CD14-positive monocyte (primary cell): ENCODE measurements at regions of chr19 and their contacts with region 1.

Region 1: DNA sequence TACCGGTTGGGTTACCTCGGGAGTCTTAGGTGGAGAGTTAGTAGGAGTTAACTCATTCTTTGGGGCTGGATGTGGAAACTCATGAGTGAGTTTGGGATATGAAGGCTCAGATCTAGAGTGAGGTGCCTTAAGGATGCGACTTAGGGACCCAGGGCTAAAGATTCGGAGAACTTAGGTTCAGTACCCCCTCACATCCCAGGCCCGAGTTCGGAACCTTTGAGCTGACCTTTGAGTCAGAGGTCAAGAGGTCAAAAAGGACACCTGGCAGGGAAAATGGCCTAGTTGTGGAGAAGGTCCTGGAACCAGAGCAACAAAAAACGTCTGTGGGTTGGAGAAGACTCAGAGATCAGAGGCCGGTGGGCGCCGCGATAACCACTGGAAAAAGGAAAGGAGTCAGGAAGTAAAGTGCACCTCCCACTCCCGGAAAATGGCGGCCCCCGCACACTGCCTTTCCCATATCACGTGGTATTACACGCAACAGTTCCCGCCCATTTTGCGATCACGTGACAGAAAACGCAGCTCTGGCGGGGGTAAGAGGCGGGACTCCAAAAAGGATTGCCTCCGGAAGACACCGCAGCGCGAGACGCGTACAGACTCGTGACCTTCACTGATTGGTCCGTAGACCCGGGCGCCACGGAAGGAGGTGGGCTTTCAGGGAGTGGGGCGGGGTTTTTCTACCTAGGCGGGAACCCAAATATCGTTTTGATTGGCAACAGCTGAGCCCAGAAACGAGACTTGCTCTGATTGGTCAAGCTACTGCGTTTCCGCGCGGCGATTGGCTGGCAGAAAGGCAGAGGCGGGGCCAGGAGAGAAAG is at the start of gene ACTMAP:
- DNase-seq: peak; percentile 100
- H3K4me3 ChIP-seq: peak within 1 kb of the TSS; percentile 47 to 76 (median 65)
- H3K4me3 Mint-ChIP-seq: peak within 1 kb of the TSS; percentile 92 to 100
- H3K27ac ChIP-seq: peak within 1 kb of the TSS; percentile 92 to 98
- H3K27ac Mint-ChIP-seq: peak within 1 kb of the TSS; percentile 99 to 100 (median 99)
- H3K4me1 ChIP-seq: peaks cover 67 to 70% of the 10 kb centered on the region in 2 donors
- H3K4me1 Mint-ChIP-seq: peaks cover 59% of the 10 kb centered on the region
- H3K27me3 ChIP-seq: no peaks in the 10 kb centered on the region
- H3K27me3 Mint-ChIP-seq: peaks cover 0 to 5% (median 0%) of the 10 kb centered on the region in 3 donors
- CTCF ChIP-seq: no peak
- polyA plus RNA-seq, gene ACTMAP: 4.3 to 13.0 (median 8.5) TPM

Region 2: DNA sequence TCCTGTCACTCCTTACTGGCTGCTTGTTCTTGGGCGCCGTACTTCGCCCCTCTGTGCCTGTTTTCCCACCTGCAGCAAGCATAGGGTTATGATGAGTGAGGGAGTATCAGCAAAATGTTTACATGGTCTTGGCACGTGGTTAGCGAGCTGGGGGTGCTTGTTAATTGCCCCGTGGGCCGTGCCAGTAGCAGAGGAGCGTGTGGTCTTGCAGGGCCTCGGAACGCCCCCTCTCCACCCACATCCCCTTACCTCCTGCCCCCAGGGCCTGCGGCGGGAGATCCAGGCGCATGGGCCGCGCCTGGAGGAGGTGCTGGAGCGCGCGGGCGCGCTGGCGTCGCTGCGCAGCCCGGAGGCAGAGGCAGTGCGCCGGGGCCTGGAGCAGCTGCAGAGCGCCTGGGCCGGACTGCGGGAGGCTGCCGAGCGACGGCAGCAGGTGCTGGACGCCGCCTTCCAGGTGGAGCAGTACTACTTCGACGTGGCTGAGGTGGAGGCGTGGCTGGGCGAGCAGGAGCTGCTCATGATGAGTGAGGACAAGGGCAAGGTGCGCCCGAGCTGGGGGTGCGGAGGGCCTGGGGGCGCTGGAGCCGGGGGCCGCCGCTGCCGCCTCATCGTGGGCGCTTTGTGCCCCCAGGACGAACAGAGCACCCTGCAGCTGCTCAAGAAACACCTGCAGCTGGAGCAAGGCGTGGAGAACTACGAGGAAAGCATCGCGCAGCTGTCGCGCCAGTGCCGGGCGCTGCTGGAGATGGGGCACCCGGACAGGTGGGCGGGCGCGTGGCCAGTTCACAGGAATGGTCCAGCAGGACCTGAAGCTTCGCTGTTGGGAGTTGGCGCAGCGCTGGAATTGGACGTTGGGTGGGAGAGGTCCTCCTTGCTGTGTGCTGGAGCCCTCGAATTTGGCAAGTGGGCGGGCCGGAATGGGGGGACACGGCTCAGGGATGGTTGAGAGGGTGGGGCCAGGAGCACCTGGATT is 196.1 kb before region 1 on chr19:
- intact Hi-C with region 1: no loop called
- DNase-seq: no peak
- H3K4me3 ChIP-seq: no peak overlapping the region
- H3K4me3 Mint-ChIP-seq: peak overlapping the region in 1 of 2 donors; percentile 78
- H3K27ac ChIP-seq: no peak overlapping the region
- H3K27ac Mint-ChIP-seq: no peak overlapping the region
- H3K4me1 ChIP-seq: no peaks in the 10 kb centered on the region
- H3K4me1 Mint-ChIP-seq: peaks cover 2% of the 10 kb centered on the region
- H3K27me3 ChIP-seq: peaks cover 19 to 47% of the 10 kb centered on the region in 2 donors
- H3K27me3 Mint-ChIP-seq: peaks cover 44 to 67% (median 66%) of the 10 kb centered on the region in 3 donors
- CTCF ChIP-seq: no peak

Region 3: DNA sequence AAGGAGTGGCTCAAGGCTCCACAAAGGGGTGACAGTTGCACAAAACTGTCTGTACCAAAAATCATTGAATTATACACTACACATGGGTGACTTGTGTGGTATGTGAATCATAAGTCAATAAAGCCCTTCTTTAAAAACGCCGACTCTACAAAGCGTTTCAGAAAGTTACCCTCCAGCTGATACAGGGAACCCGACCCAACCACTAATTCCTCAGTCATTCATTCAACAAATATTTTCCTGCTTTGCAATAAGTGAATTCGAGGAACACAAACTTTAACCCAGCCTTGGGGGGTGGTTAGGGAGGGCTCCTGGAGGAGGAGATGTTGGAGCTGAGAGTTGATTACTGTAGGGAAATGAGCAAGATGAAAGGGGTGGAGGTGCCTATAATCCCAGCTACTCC is 117.1 kb before region 1 on chr19:
- intact Hi-C with region 1: no loop called
- DNase-seq: no peak
- H3K4me3 ChIP-seq: no peak overlapping the region
- H3K4me3 Mint-ChIP-seq: peak overlapping the region in 1 of 2 donors; percentile 47
- H3K27ac ChIP-seq: no peak overlapping the region
- H3K27ac Mint-ChIP-seq: peak overlapping the region in 1 of 7 donors; percentile 14
- H3K4me1 ChIP-seq: peaks cover 0 to 4% of the 10 kb centered on the region in 2 donors
- H3K4me1 Mint-ChIP-seq: peaks cover 4% of the 10 kb centered on the region
- H3K27me3 ChIP-seq: peaks cover 0 to 5% of the 10 kb centered on the region in 2 donors
- H3K27me3 Mint-ChIP-seq: peaks cover 10 to 22% (median 10%) of the 10 kb centered on the region in 3 donors
- CTCF ChIP-seq: no peak

Region 4: GRCh38 chr19:40716655-40717324 is 33.5 kb before region 1 on chr19 and contains the starts of genes COQ8B and ITPKC:
- intact Hi-C with region 1: loop called (anchors 2 kb)
- DNase-seq: peak; percentile 91 to 97 (median 93)
- H3K4me3 ChIP-seq: peak within 1 kb of the TSS; percentile 57 to 91 (median 83)
- H3K4me3 Mint-ChIP-seq: peak within 1 kb of the TSS; percentile 84 to 94
- H3K27ac ChIP-seq: peak within 1 kb of the TSS; percentile 72 to 96
- H3K27ac Mint-ChIP-seq: peak within 1 kb of the TSS; percentile 92 to 98 (median 95)
- H3K4me1 ChIP-seq: peaks cover 60 to 69% of the 10 kb centered on the region in 2 donors
- H3K4me1 Mint-ChIP-seq: peaks cover 75% of the 10 kb centered on the region
- H3K27me3 ChIP-seq: no peaks in the 10 kb centered on the region
- H3K27me3 Mint-ChIP-seq: peaks cover 0 to 6% (median 5%) of the 10 kb centered on the region in 3 donors
- CTCF ChIP-seq: no peak
- polyA plus RNA-seq, gene COQ8B: 16.0 to 44.0 (median 23.4) TPM
- polyA plus RNA-seq, gene ITPKC: 2.7 to 5.7 (median 2.9) TPM

Region 5: GRCh38 chr19:40777937-40778705 is 27.9 kb after region 1 on chr19 and contains the start of gene RAB4B:
- intact Hi-C with region 1: loop called in 1 of 2 experiments (anchors 1 kb)
- DNase-seq: peak; percentile 99 to 100 (median 99)
- H3K4me3 ChIP-seq: peak within 1 kb of the TSS; percentile 69 to 89 (median 85)
- H3K4me3 Mint-ChIP-seq: peak within 1 kb of the TSS; percentile 94 to 97
- H3K27ac ChIP-seq: peak within 1 kb of the TSS; percentile 95 to 97
- H3K27ac Mint-ChIP-seq: peak within 1 kb of the TSS; percentile 97 to 100 (median 99)
- H3K4me1 ChIP-seq: peaks cover 19 to 24% of the 10 kb centered on the region in 2 donors
- H3K4me1 Mint-ChIP-seq: peaks cover 33% of the 10 kb centered on the region
- H3K27me3 ChIP-seq: no peaks in the 10 kb centered on the region
- H3K27me3 Mint-ChIP-seq: peaks cover 0 to 1% (median 0%) of the 10 kb centered on the region in 3 donors
- CTCF ChIP-seq: no peak
- polyA plus RNA-seq, gene RAB4B: 89.4 to 132 (median 108) TPM

Region 6: DNA sequence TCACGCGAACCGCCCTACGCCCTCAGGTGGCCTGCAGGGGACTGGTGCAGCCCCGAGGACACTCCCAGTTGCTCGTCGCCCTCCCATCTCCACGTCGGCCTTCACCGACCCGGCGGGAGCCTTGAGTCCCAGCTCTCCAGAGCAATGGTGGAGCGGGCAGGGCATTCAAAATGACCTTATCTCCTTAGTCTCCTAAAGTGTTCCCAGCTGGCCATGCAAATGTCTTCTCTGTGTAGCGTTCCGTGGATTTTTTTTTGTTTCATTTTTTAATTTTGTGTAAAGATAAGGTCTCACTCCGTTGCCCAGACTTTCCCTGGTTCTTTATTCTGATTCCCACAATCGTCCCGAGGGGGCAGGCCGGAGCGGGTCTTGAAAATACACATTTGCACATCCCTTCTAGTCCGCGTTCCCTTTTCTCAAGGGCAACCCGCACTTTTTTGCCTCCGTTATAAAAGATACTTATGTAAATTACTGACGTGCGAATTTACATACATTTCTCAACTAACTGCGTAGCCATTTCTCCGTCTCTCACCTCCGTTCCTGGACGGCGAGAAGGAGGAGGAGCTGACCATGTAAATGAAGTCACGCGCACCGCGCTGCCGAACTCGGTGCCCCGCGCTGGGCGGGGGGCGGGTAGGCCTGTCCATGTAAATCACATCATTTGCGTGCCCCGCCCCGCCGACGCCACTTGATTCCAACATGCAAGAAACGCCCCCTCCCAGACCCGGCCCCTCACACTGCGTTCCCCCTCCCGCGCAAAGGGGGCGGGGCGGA is 48.1 kb after region 1 on chr19:
- intact Hi-C with region 1: loop called (anchors 5 to 10 kb)
- DNase-seq: peak; percentile 100
- H3K4me3 ChIP-seq: peak overlapping the region; percentile 64 to 79 (median 66)
- H3K4me3 Mint-ChIP-seq: peak overlapping the region; percentile 90 to 95
- H3K27ac ChIP-seq: peak overlapping the region; percentile 93 to 94
- H3K27ac Mint-ChIP-seq: peak overlapping the region; percentile 97 to 99 (median 98)
- H3K4me1 ChIP-seq: peaks cover 46 to 49% of the 10 kb centered on the region in 2 donors
- H3K4me1 Mint-ChIP-seq: peaks cover 55% of the 10 kb centered on the region
- H3K27me3 ChIP-seq: no peaks in the 10 kb centered on the region
- H3K27me3 Mint-ChIP-seq: peaks cover 0 to 3% (median 0%) of the 10 kb centered on the region in 3 donors
- CTCF ChIP-seq: peak; percentile 53

Region 7: DNA sequence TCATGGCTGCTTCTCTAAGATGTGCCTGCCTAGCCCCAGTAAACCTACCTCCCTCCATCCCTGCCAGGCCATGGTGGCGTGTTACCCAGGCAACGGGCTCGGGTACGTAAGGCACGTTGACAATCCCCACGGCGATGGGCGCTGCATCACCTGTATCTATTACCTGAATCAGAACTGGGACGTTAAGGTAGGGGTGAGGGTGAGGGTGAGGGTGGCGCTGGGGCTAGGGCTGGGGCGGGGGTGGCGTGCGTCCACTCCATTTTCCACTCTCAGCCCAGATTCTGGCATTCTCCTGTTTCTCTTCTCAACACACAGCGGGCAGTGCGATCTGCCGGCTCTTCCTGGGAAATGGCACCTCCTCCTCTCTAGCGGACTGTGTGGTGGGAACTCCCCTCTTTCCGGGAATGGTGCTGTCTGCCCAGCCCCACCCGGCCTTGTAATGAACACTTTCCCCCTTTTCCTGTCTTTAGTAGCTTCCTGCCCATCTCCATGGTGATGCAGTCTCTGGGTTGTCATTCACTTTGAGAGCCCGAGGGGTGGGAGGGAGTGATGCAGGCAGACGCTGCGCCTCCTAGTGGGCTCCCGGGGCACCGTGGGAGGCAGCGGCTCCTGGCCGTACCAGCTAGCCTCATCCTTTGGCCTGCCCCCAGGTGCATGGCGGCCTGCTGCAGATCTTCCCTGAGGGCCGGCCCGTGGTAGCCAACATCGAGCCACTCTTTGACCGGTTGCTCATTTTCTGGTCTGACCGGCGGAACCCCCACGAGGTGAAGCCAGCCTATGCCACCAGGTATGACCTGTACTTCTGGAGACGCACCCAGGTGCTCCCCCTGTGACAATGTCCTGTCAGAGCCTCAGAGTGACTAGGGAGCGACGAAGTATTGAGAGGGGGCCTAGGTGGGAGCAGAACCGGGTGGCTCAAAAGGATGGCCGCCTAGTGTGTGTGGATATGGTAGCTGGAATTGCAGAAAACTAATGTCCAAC is 56.5 kb after region 1 on chr19:
- intact Hi-C with region 1: loop called in 1 of 2 experiments (anchors 10 kb)
- DNase-seq: peak; percentile 71 to 84 (median 73)
- H3K4me3 ChIP-seq: peak overlapping the region in 1 of 3 experiments; percentile 12
- H3K4me3 Mint-ChIP-seq: peak overlapping the region; percentile 24 to 72
- H3K27ac ChIP-seq: peak overlapping the region; percentile 19 to 24
- H3K27ac Mint-ChIP-seq: peak overlapping the region; percentile 65 to 90 (median 83)
- H3K4me1 ChIP-seq: peaks cover 58 to 69% of the 10 kb centered on the region in 2 donors
- H3K4me1 Mint-ChIP-seq: peaks cover 82% of the 10 kb centered on the region
- H3K27me3 ChIP-seq: no peaks in the 10 kb centered on the region
- H3K27me3 Mint-ChIP-seq: peaks cover 2 to 7% (median 4%) of the 10 kb centered on the region in 3 donors
- CTCF ChIP-seq: peak; percentile 95